ENCODE measurements at regions of chr6 and their contacts with region 1.

Region 1: GRCh38 chr6:90080876-90081481 is 186.7 kb downstream of the GJA10 start:
- DNase-seq: peak; percentile 94
- H3K4me3 Mint-ChIP-seq: peak overlapping the region; percentile 89
- H3K27ac Mint-ChIP-seq: peak overlapping the region; percentile 94
- H3K4me1 Mint-ChIP-seq: peaks cover 88% of the 10 kb centered on the region
- H3K27me3 Mint-ChIP-seq: no peaks in the 10 kb centered on the region

Region 2: DNA sequence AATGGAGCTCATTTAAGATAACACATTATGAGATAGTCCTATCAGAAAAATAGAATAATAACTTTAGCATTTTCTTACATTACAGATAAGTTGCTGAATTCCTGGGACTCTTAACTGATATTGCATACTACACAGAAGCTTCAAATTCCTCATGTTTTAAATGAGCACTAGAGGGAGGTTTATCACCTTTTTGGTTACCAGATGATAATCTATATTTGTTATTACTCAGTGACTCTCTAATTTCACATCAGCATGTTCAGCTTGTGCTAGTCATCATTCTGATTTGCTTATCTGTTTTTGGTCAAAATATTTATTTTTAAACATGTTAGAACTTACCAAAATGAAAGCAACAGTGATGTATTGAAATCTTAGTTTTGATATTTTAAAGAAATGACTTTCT is 207.3 kb before region 1 on chr6:
- CTCF ChIA-PET with region 1: no interaction called
- intact Hi-C with region 1: no loop called
- DNase-seq: no peak
- H3K4me3 Mint-ChIP-seq: no peak overlapping the region
- H3K27ac Mint-ChIP-seq: no peak overlapping the region
- H3K4me1 Mint-ChIP-seq: no peaks in the 10 kb centered on the region
- H3K27me3 Mint-ChIP-seq: no peaks in the 10 kb centered on the region

Region 3: GRCh38 chr6:89970609-89971337 is 110.2 kb before region 1 on chr6:
- CTCF ChIA-PET with region 1: interaction called, 3 read pairs
- intact Hi-C with region 1: loop called (anchors 2 kb)
- DNase-seq: peak; percentile 36
- H3K4me3 Mint-ChIP-seq: no peak overlapping the region
- H3K27ac Mint-ChIP-seq: no peak overlapping the region
- H3K4me1 Mint-ChIP-seq: peaks cover 54% of the 10 kb centered on the region
- H3K27me3 Mint-ChIP-seq: no peaks in the 10 kb centered on the region

Region 4: GRCh38 chr6:90095788-90096187 is 14.8 kb after region 1 on chr6:
- CTCF ChIA-PET with region 1: interaction called, 7 read pairs
- intact Hi-C with region 1: loop called (anchors 1 kb)
- DNase-seq: peak; percentile 34
- H3K4me3 Mint-ChIP-seq: peak overlapping the region; percentile 17
- H3K27ac Mint-ChIP-seq: peak overlapping the region; percentile 87
- H3K4me1 Mint-ChIP-seq: peaks cover 95% of the 10 kb centered on the region
- H3K27me3 Mint-ChIP-seq: no peaks in the 10 kb centered on the region

Region 5: GRCh38 chr6:90179190-90180169 is 98.5 kb after region 1 on chr6:
- CTCF ChIA-PET with region 1: interaction called, 4 read pairs
- intact Hi-C with region 1: loop called (anchors 1 kb)
- DNase-seq: peak; percentile 56
- H3K4me3 Mint-ChIP-seq: no peak overlapping the region
- H3K27ac Mint-ChIP-seq: peak overlapping the region; percentile 85
- H3K4me1 Mint-ChIP-seq: peaks cover 81% of the 10 kb centered on the region
- H3K27me3 Mint-ChIP-seq: no peaks in the 10 kb centered on the region

Region 6: GRCh38 chr6:90274451-90275030 is 193.6 kb after region 1 on chr6:
- CTCF ChIA-PET with region 1: no interaction called
- intact Hi-C with region 1: loop called (anchors 1 kb)
- DNase-seq: peak; percentile 96
- H3K4me3 Mint-ChIP-seq: peak overlapping the region; percentile 36
- H3K27ac Mint-ChIP-seq: peak overlapping the region; percentile 97
- H3K4me1 Mint-ChIP-seq: peaks cover 91% of the 10 kb centered on the region
- H3K27me3 Mint-ChIP-seq: no peaks in the 10 kb centered on the region

Region 7: GRCh38 chr6:90425161-90425641 is 344.2 kb after region 1 on chr6:
- CTCF ChIA-PET with region 1: no interaction called
- intact Hi-C with region 1: no loop called
- DNase-seq: peak; percentile 46
- H3K4me3 Mint-ChIP-seq: peak overlapping the region; percentile 48
- H3K27ac Mint-ChIP-seq: peak overlapping the region; percentile 92
- H3K4me1 Mint-ChIP-seq: peaks cover 41% of the 10 kb centered on the region
- H3K27me3 Mint-ChIP-seq: no peaks in the 10 kb centered on the region

Region 8: GRCh38 chr6:90458353-90459224 is 377.6 kb after region 1 on chr6:
- CTCF ChIA-PET with region 1: interaction called, 3 read pairs
- intact Hi-C with region 1: loop called (anchors 1 kb)
- DNase-seq: peak; percentile 95
- H3K4me3 Mint-ChIP-seq: peak overlapping the region; percentile 66
- H3K27ac Mint-ChIP-seq: peak overlapping the region; percentile 99
- H3K4me1 Mint-ChIP-seq: peaks cover 89% of the 10 kb centered on the region
- H3K27me3 Mint-ChIP-seq: no peaks in the 10 kb centered on the region

Measured in activated naive CD4-positive, alpha-beta T cell treated with anti-CD3 and anti-CD28 coated beads for 36 hours (primary cell).